SK-N-SH (cell line): ENCODE measurements at regions of chr4 and their contacts with region 1.

Region 1: DNA sequence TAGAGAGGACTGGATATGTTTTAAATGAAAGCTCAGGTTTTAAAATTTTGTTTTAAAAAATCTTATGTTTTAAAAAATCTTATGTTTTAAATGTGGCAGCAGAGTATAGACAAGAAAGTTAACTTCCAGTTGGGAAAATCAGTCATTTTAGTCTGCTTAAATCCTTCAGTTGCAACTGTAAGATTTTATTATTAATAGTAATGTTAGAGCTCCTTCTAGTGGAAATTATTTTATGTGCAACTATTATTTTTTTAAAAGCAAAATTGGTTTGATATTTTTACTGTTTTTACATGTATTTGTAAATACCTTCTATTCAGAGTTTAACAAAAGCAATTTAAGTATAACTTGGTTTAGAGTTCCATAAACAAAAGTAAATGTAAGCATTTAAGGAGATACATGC is 8.5 kb upstream of the NUDT6 start:
- DNase-seq: no peak
- H3K4me3 ChIP-seq: no peak overlapping the region
- H3K27ac ChIP-seq: no peak overlapping the region
- H3K4me1 ChIP-seq: peaks cover 0 to 2% of the 10 kb centered on the region in 2 experiments; a peak in 2 of 4 replicates
- H3K27me3 ChIP-seq: no peaks in the 10 kb centered on the region
- CTCF ChIP-seq: peak; percentile 82
- EP300 ChIP-seq: no peak
- RAD21 ChIP-seq: peak; percentile 54

Region 2: DNA sequence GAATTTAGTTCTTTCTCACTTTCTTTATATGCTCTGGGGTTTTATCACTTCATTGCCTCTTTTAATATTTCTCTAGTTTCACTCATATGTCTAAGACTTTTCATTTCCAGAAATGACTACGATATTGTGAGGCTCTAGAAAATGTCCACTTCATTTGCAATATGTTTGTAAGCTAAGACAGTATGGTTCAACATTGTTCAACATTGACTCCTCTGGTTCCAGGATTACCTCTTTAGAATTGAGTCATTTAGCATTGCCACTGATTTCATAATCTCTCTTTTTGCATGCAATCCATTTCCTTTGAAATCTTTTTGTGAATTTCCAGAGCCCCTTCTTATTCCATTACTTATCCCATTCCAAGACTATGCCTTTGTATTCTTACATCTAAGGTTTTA is 166.0 kb before region 1 on chr4:
- CTCF ChIA-PET with region 1: interaction called, 29 read pairs
- POLR2A ChIA-PET with region 1: no interaction called
- DNase-seq: no peak
- H3K4me3 ChIP-seq: peak overlapping the region; percentile 18 to 37; a peak in 3 of 4 replicates
- H3K27ac ChIP-seq: peak overlapping the region; percentile 85 to 91; a peak in 3 of 4 replicates
- H3K4me1 ChIP-seq: peaks cover 2 to 12% of the 10 kb centered on the region in 2 experiments; a peak in 3 of 4 replicates
- H3K27me3 ChIP-seq: no peaks in the 10 kb centered on the region
- CTCF ChIP-seq: no peak
- EP300 ChIP-seq: 0 out of 4 replicates have a peak, but pooled peaks of 1 of the 2 experiments have one; percentile 12
- RAD21 ChIP-seq: no peak

Region 3: DNA sequence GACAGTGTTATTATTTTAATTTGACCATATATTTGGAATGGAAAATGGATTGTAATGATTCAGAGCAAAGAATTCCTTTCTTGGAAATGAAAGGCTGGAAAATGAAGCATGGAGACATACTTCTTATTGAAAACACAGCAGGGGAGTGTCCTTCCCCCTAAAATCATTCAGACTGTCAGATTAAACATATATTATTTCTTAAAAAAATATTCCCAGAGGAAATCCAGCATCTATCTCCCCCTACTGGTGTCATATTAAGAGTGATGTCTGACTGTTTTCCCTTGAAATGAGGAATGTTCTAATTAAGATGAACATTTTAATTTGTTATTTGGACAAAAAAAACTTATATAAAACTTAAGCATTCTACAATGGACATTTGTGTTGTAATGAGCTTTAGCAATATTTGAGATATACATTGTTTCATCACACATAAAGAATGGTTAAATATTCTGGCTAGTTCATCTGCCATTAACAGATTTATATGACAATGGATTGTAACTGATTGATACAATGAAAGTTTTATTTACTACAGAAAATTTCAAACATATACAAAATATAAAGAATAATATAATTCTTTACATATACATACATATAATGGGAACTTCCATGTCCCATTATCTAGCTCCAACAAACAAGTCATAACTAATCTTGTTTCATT is 730.3 kb after region 1 on chr4:
- CTCF ChIA-PET with region 1: no interaction called
- POLR2A ChIA-PET with region 1: no interaction called
- DNase-seq: peak; percentile 24
- H3K4me3 ChIP-seq: no peak overlapping the region
- H3K27ac ChIP-seq: no peak overlapping the region
- H3K4me1 ChIP-seq: no peaks in the 10 kb centered on the region
- H3K27me3 ChIP-seq: no peaks in the 10 kb centered on the region
- CTCF ChIP-seq: peak; percentile 75
- EP300 ChIP-seq: no peak
- RAD21 ChIP-seq: peak; percentile 64